Posterior cingulate gyrus (tissue), 11 donors: ENCODE measurements at regions of chr16 and their contacts with region 1.

Region 1: DNA sequence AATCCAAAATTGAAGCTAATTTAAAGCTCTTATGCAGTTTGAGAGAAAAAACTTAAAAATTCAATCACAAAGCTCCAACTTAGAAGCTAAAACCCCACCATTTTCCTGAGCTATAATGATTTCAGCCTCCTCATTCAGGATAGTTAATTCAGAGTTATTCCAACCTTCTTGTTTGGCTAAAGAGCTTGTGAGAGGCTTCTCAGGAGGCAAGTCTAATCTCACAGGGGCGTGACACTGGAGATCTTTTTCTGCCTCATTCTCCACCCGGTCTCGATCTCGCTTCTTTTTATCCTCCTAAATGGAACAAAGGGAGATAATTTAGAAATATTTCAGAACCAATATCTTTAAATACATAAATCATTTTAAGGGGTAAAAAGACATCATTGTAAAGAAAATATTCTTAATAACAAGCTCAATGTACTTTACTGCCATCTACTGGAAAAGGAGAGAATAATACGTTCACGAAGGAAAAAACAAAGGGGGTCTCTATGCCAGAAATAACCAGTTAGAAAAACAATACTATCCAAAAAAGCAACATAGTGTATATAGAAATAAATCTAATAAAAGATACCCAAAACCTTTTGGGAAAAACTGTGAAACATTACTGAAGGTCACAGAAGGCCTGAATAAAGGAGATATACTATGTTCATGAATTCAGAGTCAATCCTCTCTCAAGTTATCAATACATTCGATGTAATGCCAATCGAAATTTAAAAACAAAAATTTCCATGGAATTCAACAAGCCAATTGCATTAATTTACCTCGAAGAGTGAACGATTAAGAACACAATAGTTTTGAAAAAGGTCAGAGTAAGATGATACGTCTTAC is 13.9 kb downstream of the BRD7 start:
- DNase-seq: no peak

Region 2: GRCh38 chr16:50245417-50246298 is 109.2 kb before region 1 on chr16:
- intact Hi-C with region 1: loop called (anchors 5 kb)
- DNase-seq: peak in 2 of 10 donors; percentile 66 to 86